ENCODE measurements at regions of chr16 and their contacts with region 1.

Region 1: GRCh38 chr16:50665128-50665878 is 15.8 kb downstream of the SNX20 start:
- DNase-seq: peak; percentile 76 to 84 (median 79)
- H3K4me3 ChIP-seq: peak overlapping the region; percentile 37 to 61
- H3K4me3 Mint-ChIP-seq: peak overlapping the region; percentile 75 to 86 (median 82)
- H3K27ac ChIP-seq: peak overlapping the region; percentile 41
- H3K27ac Mint-ChIP-seq: peak overlapping the region; percentile 73 to 95 (median 90)
- H3K4me1 ChIP-seq: peaks cover 40% of the 10 kb centered on the region
- H3K4me1 Mint-ChIP-seq: peaks cover 21 to 43% (median 32%) of the 10 kb centered on the region in 4 donors
- H3K27me3 ChIP-seq: no peaks in the 10 kb centered on the region
- H3K27me3 Mint-ChIP-seq: no peaks in the 10 kb centered on the region

Region 2: GRCh38 chr16:49337814-49338350 is 1327.4 kb before region 1 on chr16:
- CTCF ChIA-PET with region 1: no interaction called
- POLR2A ChIA-PET with region 1: no interaction called
- intact Hi-C with region 1: no loop called
- DNase-seq: no peak
- H3K4me3 ChIP-seq: no peak overlapping the region
- H3K4me3 Mint-ChIP-seq: no peak overlapping the region
- H3K27ac ChIP-seq: no peak overlapping the region
- H3K27ac Mint-ChIP-seq: no peak overlapping the region
- H3K4me1 ChIP-seq: no peaks in the 10 kb centered on the region
- H3K4me1 Mint-ChIP-seq: no peaks in the 10 kb centered on the region
- H3K27me3 ChIP-seq: no peaks in the 10 kb centered on the region
- H3K27me3 Mint-ChIP-seq: peaks cover 4% of the 10 kb centered on the region in 2 donors

Region 3: GRCh38 chr16:50065624-50066481 is 599.5 kb before region 1 on chr16 and contains the start of gene HEATR3:
- CTCF ChIA-PET with region 1: interaction called, 15 read pairs
- POLR2A ChIA-PET with region 1: no interaction called
- intact Hi-C with region 1: no loop called
- DNase-seq: peak; percentile 89 to 92 (median 91)
- H3K4me3 ChIP-seq: peak within 1 kb of the TSS; percentile 82 to 98
- H3K4me3 Mint-ChIP-seq: peak within 1 kb of the TSS; percentile 90 to 97 (median 93)
- H3K27ac ChIP-seq: peak within 1 kb of the TSS; percentile 79
- H3K27ac Mint-ChIP-seq: peak within 1 kb of the TSS; percentile 77 to 96 (median 94)
- H3K4me1 ChIP-seq: peaks cover 33% of the 10 kb centered on the region
- H3K4me1 Mint-ChIP-seq: peaks cover 28 to 47% (median 35%) of the 10 kb centered on the region in 4 donors
- H3K27me3 ChIP-seq: no peaks in the 10 kb centered on the region
- H3K27me3 Mint-ChIP-seq: no peaks in the 10 kb centered on the region
- total RNA-seq, gene HEATR3: 20.5 to 25.6 TPM

Region 4: GRCh38 chr16:50326949-50327402 is 338.3 kb before region 1 on chr16:
- CTCF ChIA-PET with region 1: interaction called, 83 read pairs
- POLR2A ChIA-PET with region 1: interaction called, 25 read pairs
- intact Hi-C with region 1: loop called (anchors 1 kb)
- DNase-seq: peak; percentile 80 to 90 (median 84)
- H3K4me3 ChIP-seq: no peak overlapping the region
- H3K4me3 Mint-ChIP-seq: peak overlapping the region in 4 of 8 donors; percentile 37 to 70 (median 44)
- H3K27ac ChIP-seq: peak overlapping the region; percentile 51
- H3K27ac Mint-ChIP-seq: peak overlapping the region; percentile 74 to 98 (median 90)
- H3K4me1 ChIP-seq: peaks cover 32% of the 10 kb centered on the region
- H3K4me1 Mint-ChIP-seq: peaks cover 34 to 71% (median 38%) of the 10 kb centered on the region in 4 donors
- H3K27me3 ChIP-seq: no peaks in the 10 kb centered on the region
- H3K27me3 Mint-ChIP-seq: no peaks in the 10 kb centered on the region

Region 5: DNA sequence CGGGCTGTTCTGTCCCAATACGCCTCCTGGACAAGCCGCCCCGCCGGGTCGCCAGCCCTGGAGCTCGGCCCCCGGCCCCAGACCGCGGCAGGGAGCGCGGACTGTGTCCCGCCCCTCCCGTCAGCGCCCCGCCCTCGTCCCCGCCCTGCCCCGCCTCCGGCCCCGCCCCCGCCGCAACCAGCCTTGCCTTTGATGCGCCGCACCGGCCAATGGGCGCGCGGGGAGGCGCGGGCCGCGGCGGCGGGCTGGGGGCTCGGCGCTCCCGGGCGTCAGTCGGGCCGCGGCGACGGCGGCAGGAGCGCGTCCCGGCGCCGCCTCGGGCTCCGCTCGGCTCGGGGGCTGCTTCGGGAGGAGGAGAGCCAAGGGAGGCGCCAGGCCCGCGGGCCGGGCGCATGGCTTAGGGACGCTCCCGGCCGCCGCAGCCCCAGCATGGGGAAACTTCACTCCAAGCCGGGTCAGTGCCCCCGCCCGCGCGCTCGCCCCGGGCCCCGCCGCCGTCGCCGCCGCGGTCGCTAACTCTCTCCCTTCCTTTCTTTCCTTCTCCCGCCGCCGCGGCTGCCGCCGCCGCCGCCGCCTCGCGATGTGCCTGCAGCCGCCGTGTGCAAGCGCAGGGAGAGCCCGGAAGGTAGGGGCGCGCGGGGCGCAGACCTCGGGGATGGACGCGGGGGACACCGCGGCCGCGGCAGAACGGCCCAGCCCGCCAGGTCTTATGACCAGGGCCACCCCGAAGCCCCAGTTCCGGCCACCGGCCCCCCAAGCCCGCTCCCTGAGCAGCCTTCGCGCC is 117.0 kb before region 1 on chr16 and contains the start of gene NKD1:
- CTCF ChIA-PET with region 1: interaction called, 3 read pairs
- POLR2A ChIA-PET with region 1: interaction called, 4 read pairs
- intact Hi-C with region 1: loop called (anchors 1 kb)
- DNase-seq: peak; percentile 64 to 78 (median 69)
- H3K4me3 ChIP-seq: peak within 1 kb of the TSS in 1 of 2 donors; percentile 68
- H3K4me3 Mint-ChIP-seq: peak within 1 kb of the TSS; percentile 81 to 89 (median 88)
- H3K27ac ChIP-seq: peak within 1 kb of the TSS; percentile 43
- H3K27ac Mint-ChIP-seq: peak within 1 kb of the TSS; percentile 90 to 96 (median 95)
- H3K4me1 ChIP-seq: peaks cover 30% of the 10 kb centered on the region
- H3K4me1 Mint-ChIP-seq: peaks cover 14 to 35% (median 25%) of the 10 kb centered on the region in 4 donors
- H3K27me3 ChIP-seq: no peaks in the 10 kb centered on the region
- H3K27me3 Mint-ChIP-seq: no peaks in the 10 kb centered on the region
- total RNA-seq, gene NKD1: 3.8 to 4.6 TPM

Region 6: GRCh38 chr16:50719518-50720337 is 54.4 kb after region 1 on chr16:
- CTCF ChIA-PET with region 1: interaction called, 11 read pairs
- POLR2A ChIA-PET with region 1: no interaction called
- intact Hi-C with region 1: no loop called
- DNase-seq: no peak
- H3K4me3 ChIP-seq: no peak overlapping the region
- H3K4me3 Mint-ChIP-seq: no peak overlapping the region
- H3K27ac ChIP-seq: no peak overlapping the region
- H3K27ac Mint-ChIP-seq: peak overlapping the region in 3 of 7 donors; percentile 46 to 74 (median 68)
- H3K4me1 ChIP-seq: peaks cover 12% of the 10 kb centered on the region
- H3K4me1 Mint-ChIP-seq: peaks cover 12 to 35% (median 23%) of the 10 kb centered on the region in 4 donors
- H3K27me3 ChIP-seq: no peaks in the 10 kb centered on the region
- H3K27me3 Mint-ChIP-seq: no peaks in the 10 kb centered on the region

Region 7: DNA sequence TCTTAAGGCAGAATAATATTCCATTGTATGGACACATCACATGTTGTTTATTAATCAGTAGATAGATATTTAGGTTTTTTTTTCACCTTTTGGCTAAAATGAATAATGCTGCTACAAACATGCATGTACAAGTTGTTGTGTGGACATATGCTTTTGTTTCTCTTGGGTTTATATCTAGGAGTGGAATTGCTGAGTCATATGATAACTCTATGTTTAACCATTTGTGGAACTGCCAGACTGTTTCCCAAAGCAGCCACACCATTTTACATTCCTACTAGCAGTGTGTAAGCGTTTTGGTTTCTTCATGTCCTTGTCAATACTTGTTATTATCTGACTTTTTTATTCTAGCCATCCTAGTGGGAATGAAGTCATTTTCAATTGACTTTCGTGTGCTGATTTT is 97.9 kb after region 1 on chr16:
- CTCF ChIA-PET with region 1: interaction called, 45 read pairs
- POLR2A ChIA-PET with region 1: no interaction called
- intact Hi-C with region 1: no loop called
- DNase-seq: no peak
- H3K4me3 ChIP-seq: no peak overlapping the region
- H3K4me3 Mint-ChIP-seq: peak overlapping the region in 7 of 8 donors; percentile 6 to 79 (median 71)
- H3K27ac ChIP-seq: no peak overlapping the region
- H3K27ac Mint-ChIP-seq: peak overlapping the region in 5 of 7 donors; percentile 26 to 77 (median 47)
- H3K4me1 ChIP-seq: peaks cover 99% of the 10 kb centered on the region
- H3K4me1 Mint-ChIP-seq: peaks cover 71 to 97% (median 84%) of the 10 kb centered on the region in 4 donors
- H3K27me3 ChIP-seq: no peaks in the 10 kb centered on the region
- H3K27me3 Mint-ChIP-seq: no peaks in the 10 kb centered on the region

Measured in CD4-positive, alpha-beta memory T cell (primary cell).